Esophagus squamous epithelium (tissue), 5 donors: ENCODE measurements at regions of chr3 and their contacts with region 1.

Region 1: GRCh38 chr3:168213920-168214319 is 118.2 kb upstream of the GOLIM4 start:
- DNase-seq: no peak
- H3K4me3 ChIP-seq: no peak overlapping the region
- H3K27ac ChIP-seq: no peak overlapping the region
- H3K4me1 ChIP-seq: peaks cover 0 to 5% (median 0%) of the 10 kb centered on the region in 3 donors
- H3K27me3 ChIP-seq: no peaks in the 10 kb centered on the region
- CTCF ChIP-seq: no peak
- POLR2A ChIP-seq: no peak

Region 2: GRCh38 chr3:168511428-168512014 is 297.6 kb after region 1 on chr3:
- intact Hi-C with region 1: no loop called
- DNase-seq: no peak
- H3K4me3 ChIP-seq: no peak overlapping the region
- H3K27ac ChIP-seq: no peak overlapping the region
- H3K4me1 ChIP-seq: no peaks in the 10 kb centered on the region
- H3K27me3 ChIP-seq: no peaks in the 10 kb centered on the region
- CTCF ChIP-seq: peak in 1 of 6 experiments; percentile 34
- POLR2A ChIP-seq: no peak

Region 3: DNA sequence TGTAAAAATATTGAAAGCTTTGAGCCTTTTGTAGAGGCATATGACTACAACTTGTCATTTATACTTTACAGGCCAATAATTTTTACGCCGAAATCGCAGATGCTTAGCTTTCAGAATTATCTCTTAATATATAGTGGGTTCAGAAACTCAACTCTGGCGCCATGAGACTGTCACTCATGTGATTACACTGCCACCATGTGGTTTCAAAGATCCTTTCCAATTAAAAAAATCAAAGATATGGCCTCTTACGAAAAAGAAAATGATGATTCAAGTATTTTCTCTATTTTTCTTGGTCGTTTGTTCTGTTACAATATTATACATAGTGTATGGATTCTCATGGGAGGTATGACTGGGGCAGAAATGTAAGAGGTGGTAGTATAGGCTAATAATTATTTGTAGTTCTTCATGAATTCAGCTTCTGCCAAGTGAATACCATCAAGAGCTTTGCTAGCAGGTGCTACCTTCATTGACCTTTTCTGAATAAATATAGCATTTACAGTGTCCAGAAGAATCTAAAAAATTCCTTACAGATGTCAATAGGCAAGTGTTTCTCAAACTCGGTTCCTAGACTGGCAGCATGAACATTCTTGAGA is 633.5 kb after region 1 on chr3:
- intact Hi-C with region 1: loop called (anchors 10 kb)
- DNase-seq: peak; percentile 0
- H3K4me3 ChIP-seq: no peak overlapping the region
- H3K27ac ChIP-seq: no peak overlapping the region
- H3K4me1 ChIP-seq: no peaks in the 10 kb centered on the region
- H3K27me3 ChIP-seq: peaks cover 0 to 25% (median 0%) of the 10 kb centered on the region in 4 donors
- CTCF ChIP-seq: peak; percentile 18 to 59 (median 42)
- POLR2A ChIP-seq: no peak